HepG2 (cell line): ENCODE measurements at regions of chr19 and their contacts with region 1.

Region 1: GRCh38 chr19:19531951-19532805 is 3.5 kb downstream of the YJEFN3 start:
- DNase-seq: peak; percentile 30
- ATAC-seq: peak; percentile 73
- H3K4me3 ChIP-seq: no peak overlapping the region
- H3K27ac ChIP-seq: no peak overlapping the region
- H3K4me1 ChIP-seq: peaks cover 4% of the 10 kb centered on the region; the same call in 1 of the 2 replicates
- H3K27me3 ChIP-seq: no peaks in the 10 kb centered on the region
- CTCF ChIP-seq: peak; percentile 98
- EP300 ChIP-seq: no peak
- POLR2A ChIP-seq: no peak
- RAD21 ChIP-seq: peak; percentile 90

Region 2: DNA sequence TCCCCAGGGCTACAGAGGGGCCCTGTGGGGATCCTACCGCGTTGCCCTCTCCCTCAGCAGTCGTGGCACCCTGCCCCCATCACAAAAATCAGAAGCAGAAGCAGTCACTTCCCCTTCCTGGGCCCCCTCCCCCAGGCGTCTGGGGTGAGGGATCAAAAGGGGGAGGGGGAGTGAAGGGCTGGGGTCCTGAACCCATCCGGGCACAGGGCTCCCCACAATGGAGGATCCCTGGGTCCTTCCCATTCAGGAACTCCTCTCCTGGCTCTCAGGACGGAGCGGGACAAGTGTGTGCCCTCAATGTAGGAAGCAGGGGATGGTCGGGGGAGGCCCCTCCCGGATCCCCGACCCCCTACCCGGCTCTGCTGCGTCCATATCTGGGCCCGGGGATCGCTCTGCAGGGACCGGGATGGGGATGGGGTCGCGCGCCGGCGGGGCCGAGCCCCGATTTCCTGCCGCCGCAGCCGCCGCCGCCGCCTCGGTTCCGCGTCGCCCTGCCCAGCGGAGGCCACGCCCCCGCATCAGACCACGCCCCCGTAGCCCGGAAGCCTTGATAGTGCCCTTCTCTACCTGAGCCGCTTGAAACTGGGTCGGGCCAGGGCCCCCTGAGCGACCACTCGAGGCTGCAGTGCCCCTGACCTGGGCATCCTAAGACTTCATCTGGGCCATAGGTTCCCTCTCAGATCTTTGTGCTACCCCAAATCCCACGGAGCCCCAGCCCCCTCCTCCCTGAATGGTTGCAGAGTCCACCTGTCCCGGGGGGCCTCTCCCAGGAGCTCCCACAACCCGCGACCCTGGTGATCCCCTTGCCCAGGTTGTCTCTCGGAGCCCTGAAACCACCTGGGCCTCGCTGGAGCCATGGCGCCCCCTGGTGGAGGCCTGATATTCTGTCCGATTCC is 111.2 kb after region 1 on chr19 and contains the start of gene GMIP:
- CTCF ChIA-PET with region 1: interaction called, 23 read pairs
- POLR2A ChIA-PET with region 1: interaction called, 3 read pairs
- in situ Hi-C with region 1: loop called (anchors 5 kb)
- intact Hi-C with region 1: loop called (anchors 5 kb)
- DNase-seq: peak; percentile 45
- ATAC-seq: peak; percentile 81
- H3K4me3 ChIP-seq: peak within 1 kb of the TSS; percentile 86 to 88 (median 88)
- H3K27ac ChIP-seq: peak within 1 kb of the TSS; percentile 15
- H3K4me1 ChIP-seq: no peaks in the 10 kb centered on the region
- H3K27me3 ChIP-seq: no peaks in the 10 kb centered on the region
- CTCF ChIP-seq: peak; percentile 85
- EP300 ChIP-seq: no peak
- POLR2A ChIP-seq: peak in 1 of 2 experiments; percentile 60; a peak in 2 of 4 replicates
- RAD21 ChIP-seq: peak; percentile 79
- total RNA-seq, gene GMIP: 1.3 and 1.8 TPM in 2 replicates

Region 3: DNA sequence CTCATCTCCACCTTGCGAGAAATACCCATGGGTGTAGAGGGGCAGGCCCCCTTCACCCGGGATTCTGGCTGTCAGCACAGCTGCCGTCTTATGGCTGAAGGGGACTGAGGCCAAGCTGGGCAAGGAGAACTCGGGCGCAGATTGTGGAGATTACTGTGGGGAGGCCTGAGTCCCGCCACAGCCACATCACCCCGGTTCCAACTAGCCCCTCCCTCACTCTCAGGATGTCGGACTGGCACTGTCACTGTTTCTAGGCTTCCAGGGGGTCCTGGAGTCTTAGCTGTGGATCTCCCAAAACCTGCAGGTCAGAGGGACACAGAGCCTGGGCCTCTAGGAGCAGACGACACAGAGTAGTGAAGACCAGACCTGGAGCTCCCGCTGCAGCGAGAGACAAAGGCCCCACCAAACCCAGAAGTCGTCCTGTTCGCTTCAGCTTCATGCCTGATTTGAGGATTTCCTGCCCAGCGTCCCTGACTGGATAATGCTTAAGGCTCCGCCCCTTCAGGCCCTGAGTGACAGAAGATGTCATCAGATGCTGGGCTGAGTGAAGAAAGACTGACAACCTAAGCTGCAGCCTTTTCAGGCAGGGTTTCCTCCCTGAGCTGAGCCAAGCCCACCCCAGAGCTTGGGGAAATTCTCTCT is 424.4 kb after region 1 on chr19:
- CTCF ChIA-PET with region 1: interaction called, 3 read pairs
- POLR2A ChIA-PET with region 1: no interaction called
- in situ Hi-C with region 1: loop called (anchors 25 kb)
- intact Hi-C with region 1: loop called (anchors 5 kb)
- DNase-seq: no peak
- ATAC-seq: no peak
- H3K4me3 ChIP-seq: no peak overlapping the region
- H3K27ac ChIP-seq: no peak overlapping the region
- H3K4me1 ChIP-seq: no peaks in the 10 kb centered on the region
- H3K27me3 ChIP-seq: no peaks in the 10 kb centered on the region
- CTCF ChIP-seq: no peak
- EP300 ChIP-seq: no peak
- POLR2A ChIP-seq: no peak
- RAD21 ChIP-seq: no peak